ENCODE measurements at regions of chr5 and their contacts with region 1.

Region 1: GRCh38 chr5:142305211-142305610 is 19.6 kb downstream of the SPRY4 start:
- DNase-seq: no peak
- ATAC-seq: no peak
- H3K4me3 Mint-ChIP-seq: no peak overlapping the region
- H3K27ac Mint-ChIP-seq: no peak overlapping the region
- H3K4me1 Mint-ChIP-seq: peaks cover 4% of the 10 kb centered on the region
- H3K27me3 Mint-ChIP-seq: no peaks in the 10 kb centered on the region

Region 2: DNA sequence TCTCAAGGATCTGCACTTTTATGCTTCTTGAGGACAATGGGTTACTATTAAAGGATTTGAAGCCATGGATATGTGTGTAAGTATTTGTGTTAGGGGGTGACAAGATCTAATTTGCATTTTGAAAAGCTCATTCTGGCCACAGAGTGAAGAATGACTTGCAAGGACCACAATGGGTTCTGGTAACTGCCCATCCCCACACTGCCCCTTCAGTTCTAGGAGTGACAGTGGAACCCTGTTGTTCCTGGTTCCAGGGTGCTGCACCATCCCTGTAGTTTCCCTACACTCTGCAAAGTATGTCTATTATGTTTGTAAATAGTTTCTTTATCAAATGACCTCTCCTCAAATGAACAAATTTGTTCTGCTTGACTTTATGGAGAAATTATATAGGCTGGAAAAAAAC is 29.3 kb after region 1 on chr5:
- CTCF ChIA-PET with region 1: no interaction called
- POLR2A ChIA-PET with region 1: interaction called, 10 read pairs
- intact Hi-C with region 1: no loop called
- DNase-seq: no peak
- ATAC-seq: no peak
- H3K4me3 Mint-ChIP-seq: no peak overlapping the region
- H3K27ac Mint-ChIP-seq: no peak overlapping the region
- H3K4me1 Mint-ChIP-seq: no peaks in the 10 kb centered on the region
- H3K27me3 Mint-ChIP-seq: no peaks in the 10 kb centered on the region

Measured in activated CD4-positive, alpha-beta T cell treated with anti-CD3 and anti-CD28 coated beads for 36 hours (primary cell).